CD4-positive, alpha-beta T cell (primary cell): ENCODE measurements at regions of chr2 and their contacts with region 1.

Region 1: DNA sequence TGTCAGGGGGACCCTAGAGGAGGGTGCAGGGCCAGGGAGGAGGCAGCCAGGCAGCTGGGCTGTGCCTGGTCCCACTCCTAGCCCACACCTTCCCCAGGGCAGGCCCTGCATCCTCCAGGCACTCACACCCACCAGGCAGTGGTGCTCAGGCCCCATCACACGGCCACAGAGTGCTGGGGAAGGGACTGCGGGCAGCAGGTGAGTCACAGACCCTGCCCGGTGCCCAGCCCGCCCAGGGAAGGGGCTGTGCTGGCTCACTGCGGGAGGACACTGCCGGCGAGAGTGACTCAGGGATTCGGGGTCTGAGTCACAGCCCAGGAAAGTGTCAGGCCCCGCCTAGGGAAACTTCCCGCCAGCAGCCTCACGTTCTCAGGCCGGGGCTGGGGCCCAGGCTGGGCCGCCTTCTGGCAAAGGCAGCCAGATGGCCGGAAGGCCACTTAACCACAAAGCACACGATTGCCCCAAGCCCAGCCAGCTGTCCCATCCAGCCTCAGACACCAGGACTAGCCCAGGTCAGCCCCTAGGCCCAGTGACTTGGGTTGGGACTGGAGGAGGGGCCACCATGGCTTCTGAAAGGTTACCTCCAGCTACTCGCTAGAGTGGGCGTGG is 42.2 kb downstream of the BIN1 start:
- DNase-seq: peak in 10 of 14 experiments; percentile 18 to 84 (median 42)
- ATAC-seq: peak; percentile 50
- H3K4me3 ChIP-seq: no peak overlapping the region
- H3K4me3 Mint-ChIP-seq: no peak overlapping the region
- H3K27ac ChIP-seq: peak overlapping the region; percentile 31 to 58
- H3K27ac Mint-ChIP-seq: peak overlapping the region; percentile 24
- H3K4me1 ChIP-seq: peaks cover 46% of the 10 kb centered on the region
- H3K4me1 Mint-ChIP-seq: peaks cover 15% of the 10 kb centered on the region
- H3K27me3 ChIP-seq: no peaks in the 10 kb centered on the region
- H3K27me3 Mint-ChIP-seq: no peaks in the 10 kb centered on the region
- CTCF ChIP-seq: no peak

Region 2: GRCh38 chr2:126935774-126936173 is 129.0 kb before region 1 on chr2:
- CTCF ChIA-PET with region 1: no interaction called
- POLR2A ChIA-PET with region 1: no interaction called
- intact Hi-C with region 1: no loop called
- DNase-seq: no peak
- ATAC-seq: no peak
- H3K4me3 ChIP-seq: no peak overlapping the region
- H3K4me3 Mint-ChIP-seq: no peak overlapping the region
- H3K27ac ChIP-seq: no peak overlapping the region
- H3K27ac Mint-ChIP-seq: no peak overlapping the region
- H3K4me1 ChIP-seq: no peaks in the 10 kb centered on the region
- H3K4me1 Mint-ChIP-seq: no peaks in the 10 kb centered on the region
- H3K27me3 ChIP-seq: peaks cover 0 to 6% of the 10 kb centered on the region in 2 experiments
- H3K27me3 Mint-ChIP-seq: peaks cover 47% of the 10 kb centered on the region
- CTCF ChIP-seq: no peak

Region 3: GRCh38 chr2:127025359-127026166 is 39.2 kb before region 1 on chr2:
- CTCF ChIA-PET with region 1: no interaction called
- POLR2A ChIA-PET with region 1: no interaction called
- intact Hi-C with region 1: no loop called
- DNase-seq: peak; percentile 56 to 86 (median 74)
- ATAC-seq: peak; percentile 98
- H3K4me3 ChIP-seq: peak overlapping the region; percentile 61
- H3K4me3 Mint-ChIP-seq: peak overlapping the region; percentile 92
- H3K27ac ChIP-seq: no peak overlapping the region
- H3K27ac Mint-ChIP-seq: peak overlapping the region; percentile 70
- H3K4me1 ChIP-seq: peaks cover 17% of the 10 kb centered on the region
- H3K4me1 Mint-ChIP-seq: peaks cover 14% of the 10 kb centered on the region
- H3K27me3 ChIP-seq: peaks cover 0 to 5% of the 10 kb centered on the region in 2 experiments
- H3K27me3 Mint-ChIP-seq: peaks cover 26% of the 10 kb centered on the region
- CTCF ChIP-seq: peak; percentile 14

Region 4: DNA sequence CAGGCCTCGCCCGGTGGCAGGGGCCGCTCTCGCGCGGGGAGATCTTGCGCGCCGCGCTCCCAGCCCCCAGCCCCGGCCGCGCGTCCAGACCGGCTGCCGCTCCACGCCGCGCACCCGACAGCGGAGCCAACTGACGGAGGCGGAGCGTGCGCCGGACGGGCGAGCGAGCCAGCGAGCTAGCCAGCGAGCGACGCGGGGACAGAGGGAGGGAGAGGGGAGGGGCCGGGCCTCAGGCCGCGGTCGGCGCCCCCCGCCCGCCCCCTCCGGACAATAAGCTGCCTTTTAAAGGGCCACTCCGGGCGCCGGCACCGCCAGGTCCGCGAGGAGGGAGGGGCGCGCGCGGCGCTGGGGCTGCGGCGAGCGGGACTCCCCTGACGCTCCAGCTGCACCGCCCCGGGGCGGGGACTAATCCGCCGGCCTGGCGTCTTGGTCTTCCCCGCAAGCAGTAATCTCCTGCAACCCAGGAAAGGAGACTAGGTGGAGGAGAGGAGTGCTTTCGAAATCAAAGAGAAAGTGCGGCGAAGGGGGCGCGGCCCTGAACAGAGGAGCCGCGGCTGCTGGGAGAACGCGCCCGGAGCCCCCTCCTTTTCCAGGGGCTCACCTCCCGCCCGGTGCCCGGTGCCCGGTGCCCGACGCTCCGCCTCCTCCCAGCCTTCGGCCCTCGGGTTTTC is 42.3 kb after region 1 on chr2 and contains the start of gene BIN1:
- CTCF ChIA-PET with region 1: no interaction called
- POLR2A ChIA-PET with region 1: no interaction called
- intact Hi-C with region 1: loop called (anchors 1 to 2 kb)
- DNase-seq: peak; percentile 22 to 88 (median 56)
- ATAC-seq: peak; percentile 80
- H3K4me3 ChIP-seq: peak within 1 kb of the TSS; percentile 84
- H3K4me3 Mint-ChIP-seq: peak within 1 kb of the TSS; percentile 96
- H3K27ac ChIP-seq: no peak within 1 kb of the TSS
- H3K27ac Mint-ChIP-seq: peak within 1 kb of the TSS; percentile 66
- H3K4me1 ChIP-seq: peaks cover 25% of the 10 kb centered on the region
- H3K4me1 Mint-ChIP-seq: peaks cover 11% of the 10 kb centered on the region
- H3K27me3 ChIP-seq: peaks cover 10 to 23% of the 10 kb centered on the region in 2 experiments
- H3K27me3 Mint-ChIP-seq: peaks cover 27% of the 10 kb centered on the region
- CTCF ChIP-seq: no peak
- total RNA-seq, gene BIN1: 98.8 to 104 TPM

Region 5: DNA sequence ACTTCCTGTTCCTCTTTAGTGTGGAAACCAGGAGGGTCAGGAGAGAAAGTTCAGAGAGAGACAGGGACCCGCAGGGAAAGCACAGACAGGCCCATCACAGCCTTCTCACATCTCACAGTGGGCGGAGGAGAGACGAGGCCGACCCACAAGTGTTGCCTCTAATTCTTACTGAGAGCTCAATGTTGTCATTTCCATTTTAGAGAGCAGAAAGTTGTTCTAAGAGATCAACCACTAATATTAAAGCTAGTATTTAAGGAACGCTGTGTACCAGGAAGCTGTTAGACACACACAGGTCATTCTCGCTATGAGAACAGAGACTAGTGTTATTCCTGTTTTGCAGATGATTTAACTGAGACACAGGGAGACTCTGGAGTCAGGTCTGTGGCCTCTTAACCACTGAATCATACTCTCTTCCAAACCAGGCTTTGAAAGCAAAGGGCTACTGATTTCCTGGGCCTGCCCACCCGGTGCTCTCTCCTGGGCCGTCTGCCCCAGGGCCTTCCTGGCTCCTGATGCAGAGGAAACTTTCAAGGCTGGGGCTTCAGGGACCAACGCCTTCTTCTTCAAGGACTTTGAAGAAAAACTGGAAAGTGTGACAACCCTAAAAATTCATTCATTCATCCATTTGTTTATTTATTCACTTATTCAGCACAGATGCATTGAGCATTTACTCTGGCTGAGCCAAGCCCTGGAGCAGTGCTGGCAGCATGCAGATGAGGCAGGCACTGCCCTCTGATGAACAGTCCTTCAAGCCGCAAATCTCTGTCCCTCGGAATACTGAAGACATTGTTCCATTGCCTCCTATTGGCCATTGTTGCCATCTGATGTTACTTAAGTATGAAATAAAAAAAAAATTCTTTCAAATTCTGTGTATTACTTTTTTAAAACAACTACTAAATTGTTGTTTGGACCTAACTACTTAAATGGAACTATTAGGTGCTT is 79.4 kb after region 1 on chr2:
- CTCF ChIA-PET with region 1: no interaction called
- POLR2A ChIA-PET with region 1: no interaction called
- intact Hi-C with region 1: loop called in 1 of 2 experiments (anchors 10 kb)
- DNase-seq: no peak
- ATAC-seq: no peak
- H3K4me3 ChIP-seq: no peak overlapping the region
- H3K4me3 Mint-ChIP-seq: no peak overlapping the region
- H3K27ac ChIP-seq: no peak overlapping the region
- H3K27ac Mint-ChIP-seq: no peak overlapping the region
- H3K4me1 ChIP-seq: no peaks in the 10 kb centered on the region
- H3K4me1 Mint-ChIP-seq: no peaks in the 10 kb centered on the region
- H3K27me3 ChIP-seq: no peaks in the 10 kb centered on the region
- H3K27me3 Mint-ChIP-seq: no peaks in the 10 kb centered on the region
- CTCF ChIP-seq: no peak

Region 6: DNA sequence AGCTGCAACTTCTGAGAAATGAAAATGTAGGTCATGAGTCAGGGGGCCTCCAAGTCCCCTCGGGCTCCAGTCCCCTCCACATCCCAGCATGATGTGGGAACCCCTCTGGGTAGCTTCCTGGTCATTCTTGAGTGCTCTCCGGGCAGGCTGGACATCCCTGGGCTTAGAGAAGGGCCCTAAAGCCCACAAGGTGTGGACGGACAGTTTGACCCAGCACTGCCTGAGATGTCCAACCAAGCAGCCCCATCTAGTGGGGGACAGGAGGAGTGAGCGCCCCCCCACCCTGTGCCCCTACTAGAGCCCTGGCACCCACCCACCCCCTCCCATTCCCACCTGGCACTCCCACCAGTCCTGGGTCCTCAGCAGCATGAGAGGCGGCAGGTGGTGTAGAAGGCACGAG is 109.4 kb after region 1 on chr2:
- CTCF ChIA-PET with region 1: no interaction called
- POLR2A ChIA-PET with region 1: no interaction called
- intact Hi-C with region 1: loop called in 1 of 2 experiments (anchors 5 kb)
- DNase-seq: peak in 1 of 14 experiments; percentile 16
- ATAC-seq: no peak
- H3K4me3 ChIP-seq: no peak overlapping the region
- H3K4me3 Mint-ChIP-seq: no peak overlapping the region
- H3K27ac ChIP-seq: no peak overlapping the region
- H3K27ac Mint-ChIP-seq: no peak overlapping the region
- H3K4me1 ChIP-seq: no peaks in the 10 kb centered on the region
- H3K4me1 Mint-ChIP-seq: no peaks in the 10 kb centered on the region
- H3K27me3 ChIP-seq: no peaks in the 10 kb centered on the region
- H3K27me3 Mint-ChIP-seq: no peaks in the 10 kb centered on the region
- CTCF ChIP-seq: no peak